ENCODE measurements at regions of chr6 and their contacts with region 1.

Region 1: GRCh38 chr6:36563237-36563927 is 16.1 kb upstream of the STK38 start:
- DNase-seq: no peak
- H3K4me3 ChIP-seq: no peak overlapping the region
- CTCF ChIP-seq: no peak

Region 2: DNA sequence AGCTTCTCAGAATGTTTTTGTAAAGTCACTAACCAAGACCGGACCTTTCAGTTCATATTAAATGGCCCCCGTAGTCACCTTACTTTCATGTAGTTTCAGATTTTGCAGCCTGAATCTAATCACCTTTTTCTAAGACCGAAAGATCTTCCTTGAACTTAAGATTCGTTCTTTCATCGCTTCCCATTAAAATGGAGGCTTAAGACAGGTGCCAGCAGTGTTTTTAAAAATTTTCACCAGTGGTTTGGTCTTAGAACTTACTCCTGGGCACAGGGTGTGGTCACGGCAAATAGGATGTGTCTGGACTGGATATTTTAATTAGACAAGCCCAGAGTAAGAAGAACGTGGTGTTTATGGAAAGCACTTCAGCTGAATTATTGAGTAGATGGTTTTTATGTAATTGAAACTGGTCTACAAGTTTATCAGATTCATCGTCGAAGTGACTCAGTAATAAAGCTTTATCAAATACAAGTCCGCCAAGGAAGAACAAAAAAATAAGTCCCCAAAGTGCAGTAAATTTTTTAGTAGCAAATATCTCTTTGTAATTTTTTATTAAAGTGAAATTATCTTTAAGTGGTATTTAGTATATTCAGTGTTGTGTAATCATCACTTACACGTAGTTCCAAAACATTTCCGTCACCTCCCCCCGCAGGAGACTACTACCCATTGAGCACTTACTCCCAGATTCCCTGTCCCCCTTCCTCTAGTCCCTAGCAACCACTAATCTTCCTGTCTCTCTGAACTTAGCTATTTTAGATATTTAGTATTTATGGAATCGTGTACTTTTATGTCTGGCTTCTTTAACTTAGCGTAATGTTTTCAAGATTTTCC is 31.6 kb after region 1 on chr6:
- in situ Hi-C with region 1: loop called (anchors 5 kb)
- DNase-seq: no peak
- H3K4me3 ChIP-seq: peak overlapping the region; percentile 96
- CTCF ChIP-seq: no peak